Gastrocnemius medialis (tissue), 4 donors: ENCODE measurements at regions of chr10 and their contacts with region 1.

Region 1: GRCh38 chr10:96043033-96043932 is at the start of gene CCNJ:
- DNase-seq: peak; percentile 74 to 80
- ATAC-seq: peak; percentile 88 to 92
- H3K4me3 ChIP-seq: peak within 1 kb of the TSS; percentile 72 to 81 (median 77)
- H3K27ac ChIP-seq: peak within 1 kb of the TSS; percentile 67 to 85 (median 76)
- H3K4me1 ChIP-seq: peaks cover 15 to 16% of the 10 kb centered on the region in 2 donors
- H3K27me3 ChIP-seq: no peaks in the 10 kb centered on the region
- CTCF ChIP-seq: peak in 2 of 5 experiments; percentile 27 to 37
- POLR2A ChIP-seq: peak; percentile 46 to 76
- total RNA-seq, gene CCNJ: 2.0 to 4.6 (median 3.2) TPM

Region 2: GRCh38 chr10:95395947-95396449 is 647.3 kb before region 1 on chr10:
- in situ Hi-C with region 1: no loop called
- intact Hi-C with region 1: no loop called
- DNase-seq: peak; percentile 41 to 66
- ATAC-seq: peak; percentile 37 to 64
- H3K4me3 ChIP-seq: no peak overlapping the region
- H3K27ac ChIP-seq: peak overlapping the region; percentile 91 to 98 (median 97)
- H3K4me1 ChIP-seq: peaks cover 4 to 20% of the 10 kb centered on the region in 2 donors
- H3K27me3 ChIP-seq: no peaks in the 10 kb centered on the region
- CTCF ChIP-seq: no peak
- POLR2A ChIP-seq: no peak

Region 3: GRCh38 chr10:95693668-95694534 is 349.4 kb before region 1 on chr10 and contains the start of gene TCTN3:
- in situ Hi-C with region 1: loop called in 2 of 4 experiments (anchors 25 kb)
- intact Hi-C with region 1: loop called (anchors 2 kb)
- DNase-seq: peak; percentile 97 to 98
- ATAC-seq: peak; percentile 100
- H3K4me3 ChIP-seq: peak within 1 kb of the TSS; percentile 77 to 93 (median 92)
- H3K27ac ChIP-seq: peak within 1 kb of the TSS; percentile 81 to 90 (median 87)
- H3K4me1 ChIP-seq: peaks cover 4 to 13% of the 10 kb centered on the region in 2 donors
- H3K27me3 ChIP-seq: no peaks in the 10 kb centered on the region
- CTCF ChIP-seq: peak; percentile 98 to 100 (median 99)
- POLR2A ChIP-seq: peak; percentile 41 to 51
- total RNA-seq, gene TCTN3: 6.3 to 8.6 (median 6.8) TPM

Region 4: DNA sequence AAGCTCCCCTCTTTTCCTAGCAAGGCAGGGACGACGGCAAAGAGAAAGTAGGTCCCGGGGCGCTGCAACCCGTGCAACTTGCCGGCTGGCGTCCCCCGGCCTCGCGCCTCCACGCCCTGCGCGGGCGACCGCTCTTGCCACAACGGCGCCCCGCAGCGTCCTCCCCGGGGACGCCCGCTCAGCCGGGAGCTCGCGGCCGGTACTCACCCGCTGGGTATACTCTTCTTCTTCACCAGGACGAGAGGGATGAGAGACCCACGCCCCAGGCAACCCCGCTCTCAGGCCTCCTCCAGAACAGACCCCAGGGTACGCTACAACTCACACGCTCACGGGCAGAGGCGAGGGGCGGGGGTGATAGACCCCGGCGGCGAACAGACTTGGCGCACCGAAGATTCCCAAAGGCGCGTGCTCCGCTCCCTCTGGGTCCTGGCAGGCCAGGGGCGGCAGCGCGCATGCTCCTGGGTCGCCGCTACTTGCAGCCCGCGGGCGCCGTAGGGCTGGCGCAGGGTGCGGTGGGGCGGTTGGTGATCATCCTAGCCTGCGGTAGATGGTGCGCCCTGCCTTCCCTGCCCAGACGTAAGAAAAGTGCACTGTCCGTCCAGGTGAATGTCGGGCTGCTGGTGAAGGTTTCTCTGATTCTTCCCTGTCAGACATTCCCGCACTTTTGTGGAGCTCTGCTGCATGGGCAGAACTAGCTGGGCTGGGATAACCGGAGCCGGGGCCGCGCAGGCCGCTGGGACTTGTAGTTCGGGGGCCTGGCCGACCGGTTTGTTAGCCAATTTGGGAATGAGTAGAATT is 135.6 kb before region 1 on chr10 and contains the start of gene CC2D2B:
- in situ Hi-C with region 1: no loop called
- intact Hi-C with region 1: loop called (anchors 1 kb)
- DNase-seq: peak; percentile 56 to 72
- ATAC-seq: peak; percentile 94 to 97
- H3K4me3 ChIP-seq: peak within 1 kb of the TSS; percentile 75 to 90 (median 84)
- H3K27ac ChIP-seq: peak within 1 kb of the TSS; percentile 86 to 94 (median 88)
- H3K4me1 ChIP-seq: peaks cover 0 to 5% of the 10 kb centered on the region in 2 donors
- H3K27me3 ChIP-seq: no peaks in the 10 kb centered on the region
- CTCF ChIP-seq: no peak
- POLR2A ChIP-seq: no peak
- total RNA-seq, gene CC2D2B: 0.13 to 0.36 (median 0.31) TPM in 3 of 4 donors, not detected in the other

Region 5: DNA sequence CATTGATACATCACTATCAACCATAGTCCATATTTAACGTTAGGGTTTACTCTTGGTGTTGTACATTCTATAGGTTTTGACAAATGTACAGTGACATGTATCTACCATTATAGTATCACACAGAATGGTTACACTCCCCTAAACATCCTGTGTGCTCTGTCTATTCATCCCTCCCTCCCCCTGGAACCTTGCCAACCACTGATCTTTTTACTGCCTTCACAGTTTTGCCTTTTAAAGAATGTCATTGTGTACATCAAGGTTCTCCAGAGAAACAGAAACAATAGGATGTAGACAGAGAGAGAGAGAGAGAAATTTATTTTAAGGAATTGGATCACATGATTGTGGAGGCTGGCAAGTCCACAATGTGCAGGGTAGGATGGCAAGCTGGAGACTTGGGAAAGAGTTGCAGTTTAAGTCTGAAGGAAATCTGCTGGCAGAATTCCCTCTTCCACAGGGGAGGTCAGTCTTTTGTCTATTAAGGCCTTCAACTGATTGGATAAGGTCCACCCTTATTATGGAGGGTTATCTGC is 45.0 kb before region 1 on chr10:
- in situ Hi-C with region 1: no loop called
- intact Hi-C with region 1: no loop called
- DNase-seq: no peak
- ATAC-seq: no peak
- H3K4me3 ChIP-seq: no peak overlapping the region
- H3K27ac ChIP-seq: no peak overlapping the region
- H3K4me1 ChIP-seq: no peaks in the 10 kb centered on the region
- H3K27me3 ChIP-seq: no peaks in the 10 kb centered on the region
- CTCF ChIP-seq: no peak
- POLR2A ChIP-seq: no peak

Region 6: DNA sequence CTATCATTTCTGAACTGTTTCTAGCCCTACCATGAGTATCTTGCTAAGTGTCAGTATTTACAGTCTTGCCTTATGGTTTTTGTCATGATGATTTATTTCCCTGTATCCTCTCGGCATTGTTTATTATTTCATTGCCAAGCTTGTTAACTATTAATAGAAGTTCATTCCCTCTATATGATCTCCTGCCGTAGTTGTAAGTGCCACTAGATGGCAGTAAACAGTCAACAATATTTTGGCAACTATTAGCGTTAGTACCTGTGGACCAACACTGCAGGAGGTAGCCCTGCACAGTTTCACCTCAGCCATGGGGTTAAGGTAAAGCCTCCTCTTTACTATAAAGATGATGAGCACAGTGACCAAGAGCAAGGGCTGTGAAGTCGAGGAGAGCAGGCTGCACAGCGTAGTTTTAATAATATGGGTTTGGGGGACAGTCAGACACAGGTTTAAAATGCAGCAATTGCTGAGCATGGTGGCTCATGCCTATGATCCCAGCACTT is 26.0 kb before region 1 on chr10:
- in situ Hi-C with region 1: no loop called
- intact Hi-C with region 1: loop called (anchors 1 kb)
- DNase-seq: no peak
- ATAC-seq: peak; percentile 74 to 87
- H3K4me3 ChIP-seq: no peak overlapping the region
- H3K27ac ChIP-seq: no peak overlapping the region
- H3K4me1 ChIP-seq: no peaks in the 10 kb centered on the region
- H3K27me3 ChIP-seq: no peaks in the 10 kb centered on the region
- CTCF ChIP-seq: peak; percentile 42 to 81 (median 60)
- POLR2A ChIP-seq: no peak

Region 7: DNA sequence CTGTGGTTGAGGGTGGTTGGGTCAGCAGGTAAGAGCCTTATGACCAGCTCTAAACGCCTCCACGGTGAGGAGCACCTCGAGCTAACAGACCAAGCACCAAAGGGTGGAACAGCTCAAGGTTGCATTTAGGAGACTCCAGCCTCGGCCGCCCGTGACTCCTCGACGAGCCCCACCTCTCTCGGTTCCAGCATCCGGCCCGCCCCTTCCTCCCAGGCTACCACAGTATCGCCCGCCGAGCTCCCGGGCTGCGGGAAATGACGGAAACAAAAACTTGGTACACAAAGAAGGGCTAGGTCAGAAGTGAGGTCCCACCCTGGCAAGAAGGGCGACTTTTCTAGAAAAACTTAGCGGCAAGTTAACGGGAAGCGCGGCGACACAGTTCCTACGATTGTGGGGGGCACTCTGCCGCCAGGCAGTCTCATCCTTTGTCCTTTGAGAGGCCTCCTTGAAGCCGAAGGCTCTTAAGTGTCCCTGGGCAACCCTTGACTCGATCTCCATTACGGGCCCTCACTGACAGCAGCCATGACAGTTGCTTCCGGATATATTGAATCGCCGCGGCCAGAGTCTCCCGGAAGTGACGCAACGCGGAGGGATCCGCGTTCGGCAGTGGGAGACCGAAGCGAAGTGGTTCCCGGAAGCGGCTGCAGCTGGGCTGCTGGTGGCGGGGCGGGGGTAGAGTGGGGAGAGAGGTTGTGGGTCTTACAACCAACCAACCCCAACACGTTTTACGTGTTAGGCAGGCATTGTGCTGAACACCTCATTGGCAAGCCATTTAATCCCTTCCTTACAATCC is 46.6 kb after region 1 on chr10:
- in situ Hi-C with region 1: no loop called
- intact Hi-C with region 1: loop called (anchors 1 kb)
- DNase-seq: peak; percentile 62 to 89
- ATAC-seq: peak; percentile 89 to 99
- H3K4me3 ChIP-seq: peak overlapping the region; percentile 53 to 80 (median 70)
- H3K27ac ChIP-seq: peak overlapping the region; percentile 61 to 84 (median 70)
- H3K4me1 ChIP-seq: peaks cover 6 to 7% of the 10 kb centered on the region in 2 donors
- H3K27me3 ChIP-seq: peaks cover 21 to 42% (median 25%) of the 10 kb centered on the region in 3 donors
- CTCF ChIP-seq: no peak
- POLR2A ChIP-seq: peak in 1 of 2 donors; percentile 22

Region 8: DNA sequence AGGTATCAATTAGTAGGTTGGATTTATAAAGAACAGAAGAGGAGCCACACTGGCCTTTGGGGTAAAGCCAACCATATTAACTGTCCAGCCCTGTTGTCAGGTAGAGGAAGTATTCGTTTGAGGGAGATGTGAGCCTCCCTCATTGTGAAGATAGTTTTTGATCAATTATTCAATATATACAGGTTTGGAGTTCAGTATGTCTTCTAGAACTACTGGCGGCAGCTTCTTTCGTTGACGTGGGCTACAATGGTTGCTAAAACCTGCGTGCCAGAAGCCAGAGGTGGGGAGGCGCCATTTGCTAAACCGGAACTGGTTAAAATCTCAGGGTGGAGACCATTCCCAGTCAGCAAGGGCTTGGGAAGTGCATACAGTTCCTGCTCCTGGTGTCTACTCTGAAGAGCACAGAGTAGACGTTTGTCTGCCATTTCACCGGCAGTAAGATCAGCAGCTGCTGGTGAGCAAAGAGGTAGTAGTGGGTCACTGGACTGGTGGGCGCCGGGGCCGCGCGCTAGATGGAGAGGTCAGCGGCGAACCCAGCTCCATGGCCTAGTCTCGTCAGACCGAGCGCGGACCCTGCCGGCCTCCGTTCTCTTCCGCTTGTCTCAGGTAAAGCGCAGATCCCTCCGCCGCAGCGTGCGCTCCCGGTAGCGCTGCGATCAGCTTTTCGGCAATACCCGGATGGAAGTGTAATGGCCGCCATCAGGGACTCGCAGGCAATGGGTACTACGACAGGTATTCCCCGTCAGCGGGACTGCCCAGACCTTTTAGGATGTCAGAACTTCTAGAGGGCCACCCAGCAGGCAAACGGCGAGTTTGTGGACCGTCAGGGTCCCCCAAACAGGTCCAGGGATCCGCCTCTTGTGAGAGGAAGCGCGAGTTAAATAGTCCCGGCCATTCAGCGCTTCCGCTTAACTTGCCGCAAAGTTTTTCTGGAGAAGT is 86.4 kb after region 1 on chr10 and contains the start of gene ZNF518A:
- in situ Hi-C with region 1: no loop called
- intact Hi-C with region 1: loop called (anchors 5 kb)
- DNase-seq: peak; percentile 77 to 87
- ATAC-seq: peak; percentile 94 to 96
- H3K4me3 ChIP-seq: peak within 1 kb of the TSS; percentile 81 to 88 (median 83)
- H3K27ac ChIP-seq: peak within 1 kb of the TSS; percentile 78 to 86 (median 82)
- H3K4me1 ChIP-seq: peaks cover 9 to 12% of the 10 kb centered on the region in 2 donors
- H3K27me3 ChIP-seq: peaks cover 0 to 47% (median 24%) of the 10 kb centered on the region in 3 donors
- CTCF ChIP-seq: no peak
- POLR2A ChIP-seq: no peak
- total RNA-seq, gene ZNF518A: 4.9 to 11.8 (median 8.2) TPM

Region 9: GRCh38 chr10:96292971-96293920 is 250.0 kb after region 1 on chr10:
- in situ Hi-C with region 1: loop called in 1 of 4 experiments (anchors 25 kb)
- intact Hi-C with region 1: no loop called
- DNase-seq: no peak
- ATAC-seq: peak; percentile 74 to 78
- H3K4me3 ChIP-seq: no peak overlapping the region
- H3K27ac ChIP-seq: no peak overlapping the region
- H3K4me1 ChIP-seq: peaks cover 3 to 4% of the 10 kb centered on the region in 2 donors
- H3K27me3 ChIP-seq: peaks cover 0 to 7% (median 3%) of the 10 kb centered on the region in 3 donors
- CTCF ChIP-seq: peak in 4 of 5 experiments; percentile 28 to 60 (median 42)
- POLR2A ChIP-seq: no peak

Region 10: DNA sequence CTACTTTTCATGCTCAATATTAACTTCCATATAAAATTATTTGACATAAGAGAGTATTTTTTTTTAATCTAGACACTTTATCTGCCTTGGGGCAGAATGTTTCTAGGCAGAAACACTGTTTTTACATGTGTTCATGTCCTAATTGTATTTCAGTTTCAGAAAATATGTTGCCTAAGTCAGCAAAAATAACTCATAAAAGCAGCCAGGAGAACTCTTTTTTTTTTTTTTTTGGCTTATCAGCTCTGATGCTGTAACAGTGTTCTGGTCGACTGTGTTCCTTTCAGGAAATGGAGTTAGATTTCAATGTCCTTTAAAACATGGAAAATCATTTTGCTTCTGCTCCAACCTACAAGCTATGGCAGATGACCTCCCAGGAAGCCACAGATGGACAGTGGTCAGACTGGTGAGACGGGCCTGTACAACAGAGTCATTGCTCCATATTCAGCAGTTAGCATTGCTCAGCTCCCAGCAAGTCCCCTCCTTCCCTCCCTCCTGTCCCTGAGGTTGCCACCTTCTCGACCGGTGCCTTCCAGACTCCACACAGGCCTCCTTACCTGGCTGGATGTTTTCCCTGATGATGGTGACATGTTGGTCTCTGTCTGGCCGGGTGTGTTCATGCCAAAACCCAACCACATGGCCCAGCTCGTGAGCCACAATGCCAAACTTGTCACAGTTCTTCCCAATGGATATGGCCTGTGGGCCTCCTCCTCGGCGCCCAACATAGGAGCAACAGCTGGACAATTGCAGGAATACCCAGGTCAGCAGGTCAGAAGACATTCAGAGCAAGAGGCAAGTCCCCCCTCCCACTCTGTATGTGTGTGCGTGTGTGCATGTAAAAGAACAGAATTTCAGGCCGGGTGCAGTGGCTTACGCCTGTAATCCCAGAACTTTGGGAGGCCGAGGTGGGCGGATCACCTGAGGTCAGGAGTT is 379.0 kb after region 1 on chr10:
- in situ Hi-C with region 1: no loop called
- intact Hi-C with region 1: no loop called
- DNase-seq: no peak
- ATAC-seq: no peak
- H3K4me3 ChIP-seq: no peak overlapping the region
- H3K27ac ChIP-seq: no peak overlapping the region
- H3K4me1 ChIP-seq: no peaks in the 10 kb centered on the region
- H3K27me3 ChIP-seq: peaks cover 0 to 2% (median 0%) of the 10 kb centered on the region in 3 donors
- CTCF ChIP-seq: no peak
- POLR2A ChIP-seq: no peak